ENCODE measurements at regions of chr7 and their contacts with region 1.

Region 1: GRCh38 chr7:46153951-46154787 is 233.1 kb upstream of the IGFBP3 start:
- DNase-seq: peak; percentile 55
- ATAC-seq: peak; percentile 91
- H3K4me3 ChIP-seq: no peak overlapping the region
- H3K27ac ChIP-seq: peak overlapping the region; percentile 4
- H3K4me1 ChIP-seq: peaks cover 8% of the 10 kb centered on the region
- H3K27me3 ChIP-seq: no peaks in the 10 kb centered on the region
- CTCF ChIP-seq: peak in 1 of 3 experiments; percentile 12; a peak in 1 of 6 replicates
- EP300 ChIP-seq: peak in 1 of 2 experiments; percentile 19; a peak in 1 of 4 replicates
- POLR2A ChIP-seq: no peak
- RAD21 ChIP-seq: 0 out of 2 replicates have a peak, but pooled peaks have one; percentile 16

Region 2: GRCh38 chr7:45985902-45986301 is 168.3 kb before region 1 on chr7:
- CTCF ChIA-PET with region 1: interaction called, 3 read pairs
- POLR2A ChIA-PET with region 1: no interaction called
- RAD21 ChIA-PET with region 1: interaction called, 9 read pairs
- SMC1A ChIA-PET with region 1: interaction called, 4 read pairs
- in situ Hi-C with region 1: no loop called
- intact Hi-C with region 1: loop called (anchors 5 kb)
- DNase-seq: no peak
- ATAC-seq: no peak
- H3K4me3 ChIP-seq: no peak overlapping the region
- H3K27ac ChIP-seq: no peak overlapping the region
- H3K4me1 ChIP-seq: no peaks in the 10 kb centered on the region
- H3K27me3 ChIP-seq: no peaks in the 10 kb centered on the region
- CTCF ChIP-seq: no peak
- EP300 ChIP-seq: no peak
- POLR2A ChIP-seq: no peak
- RAD21 ChIP-seq: no peak

Region 3: GRCh38 chr7:46058086-46058823 is 95.9 kb before region 1 on chr7:
- CTCF ChIA-PET with region 1: interaction called, 3 read pairs
- POLR2A ChIA-PET with region 1: no interaction called
- RAD21 ChIA-PET with region 1: interaction called, 3 read pairs
- SMC1A ChIA-PET with region 1: interaction called, 4 read pairs
- in situ Hi-C with region 1: no loop called
- intact Hi-C with region 1: loop called (anchors 5 kb)
- DNase-seq: no peak
- ATAC-seq: peak; percentile 85
- H3K4me3 ChIP-seq: no peak overlapping the region
- H3K27ac ChIP-seq: no peak overlapping the region
- H3K4me1 ChIP-seq: no peaks in the 10 kb centered on the region
- H3K27me3 ChIP-seq: no peaks in the 10 kb centered on the region
- CTCF ChIP-seq: no peak
- EP300 ChIP-seq: peak; percentile 77 to 82; a peak in 3 of 4 replicates
- POLR2A ChIP-seq: no peak
- RAD21 ChIP-seq: no peak

Region 4: GRCh38 chr7:46139079-46139478 is 15.1 kb before region 1 on chr7:
- CTCF ChIA-PET with region 1: interaction called, 8 read pairs
- POLR2A ChIA-PET with region 1: interaction called, 10 read pairs
- RAD21 ChIA-PET with region 1: interaction called, 34 read pairs
- SMC1A ChIA-PET with region 1: interaction called, 28 read pairs
- in situ Hi-C with region 1: no loop called
- intact Hi-C with region 1: no loop called
- DNase-seq: peak; percentile 48
- ATAC-seq: peak; percentile 95
- H3K4me3 ChIP-seq: no peak overlapping the region
- H3K27ac ChIP-seq: no peak overlapping the region
- H3K4me1 ChIP-seq: no peaks in the 10 kb centered on the region
- H3K27me3 ChIP-seq: no peaks in the 10 kb centered on the region
- CTCF ChIP-seq: no peak
- EP300 ChIP-seq: peak; percentile 76 to 91
- POLR2A ChIP-seq: no peak
- RAD21 ChIP-seq: no peak

Region 5: DNA sequence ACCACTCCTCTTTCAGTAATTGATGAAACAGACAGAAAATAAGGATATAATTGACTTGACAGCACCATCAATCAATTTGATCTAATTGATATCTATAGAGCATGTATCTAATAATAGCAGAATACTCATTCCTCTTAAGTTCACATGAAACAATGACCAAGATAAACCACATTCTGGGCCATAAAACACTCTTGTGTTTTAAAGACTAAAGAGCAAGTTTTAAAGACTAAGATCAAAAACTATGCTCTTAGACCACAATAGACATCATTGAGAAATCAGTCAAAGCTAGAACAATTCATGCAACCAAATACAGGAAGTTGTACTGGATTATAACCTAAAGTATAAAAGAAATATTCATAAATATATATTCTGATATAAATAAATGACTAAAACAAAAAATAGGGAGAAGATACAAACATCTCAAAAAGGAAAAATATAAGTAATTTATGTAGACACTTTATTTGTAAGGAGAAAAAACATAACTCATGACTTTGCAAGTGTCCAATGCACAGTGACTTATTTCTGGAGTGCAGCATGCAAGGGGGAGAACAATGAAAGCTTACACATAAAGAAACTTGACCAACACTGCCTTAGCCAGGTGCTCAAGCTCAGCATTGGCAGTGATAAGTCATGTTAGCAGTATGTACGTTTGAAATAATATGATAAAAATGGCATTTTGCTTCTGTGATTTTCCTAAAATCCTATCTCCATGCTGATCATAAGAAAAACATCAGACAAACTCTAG is 79.6 kb after region 1 on chr7:
- CTCF ChIA-PET with region 1: interaction called, 5 read pairs
- POLR2A ChIA-PET with region 1: no interaction called
- RAD21 ChIA-PET with region 1: interaction called, 3 read pairs
- SMC1A ChIA-PET with region 1: interaction called, 5 read pairs
- in situ Hi-C with region 1: no loop called
- intact Hi-C with region 1: loop called (anchors 5 kb)
- DNase-seq: peak; percentile 17
- ATAC-seq: peak; percentile 96
- H3K4me3 ChIP-seq: no peak overlapping the region
- H3K27ac ChIP-seq: no peak overlapping the region
- H3K4me1 ChIP-seq: no peaks in the 10 kb centered on the region
- H3K27me3 ChIP-seq: no peaks in the 10 kb centered on the region
- CTCF ChIP-seq: no peak
- EP300 ChIP-seq: peak; percentile 50 to 60; a peak in 2 of 4 replicates
- POLR2A ChIP-seq: no peak
- RAD21 ChIP-seq: no peak

Region 6: DNA sequence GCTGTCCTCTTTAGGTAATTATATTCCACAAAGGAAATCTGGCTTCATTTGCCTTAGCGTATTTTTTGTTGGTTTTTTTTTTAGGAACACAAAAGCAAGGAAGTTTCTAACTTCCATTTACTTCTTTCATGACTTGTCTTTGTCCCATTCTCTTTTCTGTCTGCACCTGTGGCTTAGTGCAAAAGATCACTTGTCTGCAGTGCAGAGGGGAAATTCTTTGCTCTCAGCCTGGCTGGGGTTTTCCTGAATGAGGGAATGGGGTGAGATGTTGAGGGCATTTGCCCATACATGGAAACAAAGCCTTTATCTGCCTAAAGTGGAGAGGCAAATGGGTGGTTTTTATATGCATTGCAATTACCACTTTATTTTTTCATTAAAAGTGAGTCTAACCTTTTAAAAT is 128.0 kb after region 1 on chr7:
- CTCF ChIA-PET with region 1: no interaction called
- POLR2A ChIA-PET with region 1: interaction called, 5 read pairs
- RAD21 ChIA-PET with region 1: interaction called, 16 read pairs
- SMC1A ChIA-PET with region 1: interaction called, 4 read pairs
- in situ Hi-C with region 1: no loop called
- intact Hi-C with region 1: no loop called
- DNase-seq: peak; percentile 15
- ATAC-seq: peak; percentile 78
- H3K4me3 ChIP-seq: no peak overlapping the region
- H3K27ac ChIP-seq: no peak overlapping the region; the same call in 1 of the 2 replicates
- H3K4me1 ChIP-seq: no peaks in the 10 kb centered on the region
- H3K27me3 ChIP-seq: no peaks in the 10 kb centered on the region
- CTCF ChIP-seq: no peak
- EP300 ChIP-seq: 0 out of 4 replicates have a peak, but pooled peaks of 1 of the 2 experiments have one; percentile 5
- POLR2A ChIP-seq: no peak
- RAD21 ChIP-seq: no peak

Region 7: DNA sequence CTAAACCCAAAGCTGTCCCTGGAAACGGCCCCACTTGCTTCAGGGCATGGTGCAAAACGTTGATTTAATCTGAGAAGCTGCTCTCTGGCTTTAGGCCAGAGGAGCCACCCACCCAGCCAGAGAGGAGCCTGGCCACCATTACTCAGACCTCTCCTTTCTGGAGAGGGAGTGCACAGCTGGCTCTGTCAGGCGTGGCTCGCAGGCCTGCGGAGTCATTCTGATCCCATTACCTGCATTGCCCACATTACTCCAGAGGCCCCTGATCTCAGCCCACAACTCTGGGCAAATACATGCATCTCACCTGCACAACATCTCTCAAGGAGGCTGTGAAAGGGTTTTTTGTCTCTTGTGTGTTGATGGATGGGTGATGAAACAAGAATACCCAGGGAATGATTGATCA is 136.9 kb after region 1 on chr7:
- CTCF ChIA-PET with region 1: interaction called, 3 read pairs
- POLR2A ChIA-PET with region 1: interaction called, 3 read pairs
- RAD21 ChIA-PET with region 1: interaction called, 18 read pairs
- SMC1A ChIA-PET with region 1: interaction called, 6 read pairs
- in situ Hi-C with region 1: no loop called
- intact Hi-C with region 1: loop called (anchors 2 kb)
- DNase-seq: peak; percentile 47
- ATAC-seq: peak; percentile 94
- H3K4me3 ChIP-seq: no peak overlapping the region
- H3K27ac ChIP-seq: peak overlapping the region; percentile 19; the same call in 1 of the 2 replicates
- H3K4me1 ChIP-seq: no peaks in the 10 kb centered on the region
- H3K27me3 ChIP-seq: no peaks in the 10 kb centered on the region
- CTCF ChIP-seq: no peak
- EP300 ChIP-seq: no peak
- POLR2A ChIP-seq: no peak
- RAD21 ChIP-seq: no peak

Measured in GM12878 (cell line).